ENCODE measurements at regions of chr18 and their contacts with region 1.

Region 1: GRCh38 chr18:23194155-23194996 is 59.1 kb downstream of the CABLES1 start:
- DNase-seq: peak; percentile 51
- H3K4me3 ChIP-seq: no peak overlapping the region
- H3K27ac ChIP-seq: no peak overlapping the region
- H3K4me1 ChIP-seq: peaks cover 39% of the 10 kb centered on the region
- H3K27me3 ChIP-seq: no peaks in the 10 kb centered on the region
- CTCF ChIP-seq: no peak

Region 2: GRCh38 chr18:23155537-23155936 is 38.8 kb before region 1 on chr18:
- CTCF ChIA-PET with region 1: no interaction called
- POLR2A ChIA-PET with region 1: no interaction called
- intact Hi-C with region 1: loop called (anchors 5 kb)
- DNase-seq: no peak
- H3K4me3 ChIP-seq: no peak overlapping the region
- H3K27ac ChIP-seq: no peak overlapping the region
- H3K4me1 ChIP-seq: peaks cover 5% of the 10 kb centered on the region
- H3K27me3 ChIP-seq: no peaks in the 10 kb centered on the region
- CTCF ChIP-seq: no peak

Region 3: DNA sequence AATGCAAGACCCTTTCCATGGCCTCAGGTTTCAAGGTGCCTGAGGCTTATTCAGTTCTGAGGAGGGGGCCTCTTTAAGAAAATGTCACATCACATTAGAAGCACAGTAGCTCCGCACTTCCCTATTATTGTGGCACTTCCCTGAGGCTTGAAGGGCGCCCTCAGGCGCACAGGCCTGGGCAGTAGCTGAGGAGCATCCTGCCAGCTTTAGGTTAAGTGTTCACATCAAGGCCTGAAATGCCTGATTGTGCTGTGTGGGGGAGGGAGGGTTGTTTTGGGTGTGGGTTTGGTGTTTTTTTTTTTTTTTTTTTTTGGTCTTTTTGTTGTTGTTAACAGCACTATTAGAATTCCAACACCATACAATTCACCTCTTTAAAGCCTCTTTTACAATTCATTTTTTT is 48.8 kb after region 1 on chr18:
- CTCF ChIA-PET with region 1: no interaction called
- POLR2A ChIA-PET with region 1: no interaction called
- intact Hi-C with region 1: loop called (anchors 5 kb)
- DNase-seq: no peak
- H3K4me3 ChIP-seq: no peak overlapping the region
- H3K27ac ChIP-seq: no peak overlapping the region
- H3K4me1 ChIP-seq: peaks cover 12% of the 10 kb centered on the region
- H3K27me3 ChIP-seq: no peaks in the 10 kb centered on the region
- CTCF ChIP-seq: no peak

Measured in A673 (cell line).